Left ventricle myocardium inferior (tissue), 1 donor: ENCODE measurements at regions of chr9 and their contacts with region 1.

Region 1: GRCh38 chr9:124420991-124421543 is 5.8 kb upstream of the PSMB7 start:
- DNase-seq: no peak
- H3K4me3 ChIP-seq: no peak overlapping the region
- H3K27ac ChIP-seq: no peak overlapping the region
- H3K4me1 ChIP-seq: no peaks in the 10 kb centered on the region
- H3K27me3 ChIP-seq: peaks cover 7% of the 10 kb centered on the region
- CTCF ChIP-seq: no peak

Region 2: GRCh38 chr9:124532897-124533296 is 111.8 kb after region 1 on chr9:
- intact Hi-C with region 1: loop called (anchors 10 kb)
- DNase-seq: no peak
- H3K4me3 ChIP-seq: no peak overlapping the region
- H3K27ac ChIP-seq: no peak overlapping the region
- H3K4me1 ChIP-seq: no peaks in the 10 kb centered on the region
- H3K27me3 ChIP-seq: no peaks in the 10 kb centered on the region
- CTCF ChIP-seq: no peak